Motor neuron (in vitro differentiated cells): ENCODE measurements at regions of chr3 and their contacts with region 1.

Region 1: GRCh38 chr3:48548729-48549705 is 7.6 kb downstream of the PFKFB4 start:
- ATAC-seq: peak; percentile 78 to 97 (median 92)
- H3K4me3 ChIP-seq: no peak overlapping the region
- H3K27ac ChIP-seq: no peak overlapping the region
- H3K4me1 ChIP-seq: peaks cover 0 to 2% of the 10 kb centered on the region in 2 donors

Region 2: DNA sequence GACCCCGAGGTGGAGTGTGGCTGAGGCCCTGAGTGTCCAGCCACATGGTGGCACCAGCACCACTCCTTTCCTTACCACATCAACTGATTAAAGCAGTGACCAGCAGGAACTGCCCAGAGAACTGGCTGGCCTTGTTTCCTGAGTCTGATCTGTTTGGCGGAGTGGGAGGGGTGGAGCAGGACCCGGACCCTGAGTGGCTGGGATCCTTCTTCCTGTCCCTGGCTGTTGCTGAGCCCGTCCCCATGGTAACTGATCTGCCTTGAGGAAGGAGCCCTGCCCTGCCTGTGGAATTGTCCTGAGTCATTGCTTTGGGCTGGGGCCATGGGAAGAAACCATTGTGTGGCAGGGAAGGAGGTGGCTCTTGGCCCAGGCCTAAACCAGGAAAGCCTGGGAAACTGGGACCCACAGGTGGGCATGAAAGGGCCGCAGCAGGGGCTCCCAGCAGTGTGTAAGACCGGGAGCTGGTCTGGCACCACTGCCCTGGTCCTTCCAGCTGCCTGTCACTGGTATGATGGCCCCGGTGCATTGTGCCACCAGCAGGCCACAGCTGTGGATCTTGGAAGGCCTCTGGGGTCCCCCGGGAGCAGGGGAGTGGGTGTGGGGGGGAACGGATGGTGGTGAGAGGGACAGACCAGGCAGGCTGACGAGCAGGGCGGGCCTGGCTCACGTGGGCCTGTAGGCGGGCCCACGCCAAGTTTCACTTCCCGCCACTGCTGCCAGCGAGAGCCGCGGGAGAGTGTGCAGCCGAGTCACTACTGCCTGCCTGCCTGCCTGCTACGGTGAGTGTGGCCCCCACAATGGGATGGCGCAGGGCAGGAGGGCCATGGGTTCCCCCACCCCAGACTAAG is 83.3 kb before region 1 on chr3:
- in situ Hi-C with region 1: loop called in 1 of 9 experiments (anchors 10 kb)
- ATAC-seq: peak; percentile 89 to 94 (median 92)
- H3K4me3 ChIP-seq: peak overlapping the region in 4 of 5 donors; percentile 7 to 31 (median 18)
- H3K27ac ChIP-seq: peak overlapping the region; percentile 92 to 97
- H3K4me1 ChIP-seq: peaks cover 27 to 34% of the 10 kb centered on the region in 2 donors